ENCODE measurements at regions of chr10 and their contacts with region 1.

Region 1: GRCh38 chr10:57579926-57580325 is 687.8 kb downstream of the IPMK start:
- DNase-seq: no peak
- H3K4me3 ChIP-seq: no peak overlapping the region
- H3K27ac ChIP-seq: no peak overlapping the region
- H3K4me1 ChIP-seq: no peaks in the 10 kb centered on the region
- H3K27me3 ChIP-seq: no peaks in the 10 kb centered on the region
- CTCF ChIP-seq: peak; percentile 62

Region 2: GRCh38 chr10:58064714-58065528 is 485.0 kb after region 1 on chr10:
- CTCF ChIA-PET with region 1: no interaction called
- POLR2A ChIA-PET with region 1: no interaction called
- intact Hi-C with region 1: loop called (anchors 5 kb)
- DNase-seq: peak in 1 of 2 experiments; percentile 22
- H3K4me3 ChIP-seq: no peak overlapping the region
- H3K27ac ChIP-seq: no peak overlapping the region
- H3K4me1 ChIP-seq: no peaks in the 10 kb centered on the region
- H3K27me3 ChIP-seq: no peaks in the 10 kb centered on the region; the same call in 1 of the 2 replicates
- CTCF ChIP-seq: peak; percentile 86

Region 3: DNA sequence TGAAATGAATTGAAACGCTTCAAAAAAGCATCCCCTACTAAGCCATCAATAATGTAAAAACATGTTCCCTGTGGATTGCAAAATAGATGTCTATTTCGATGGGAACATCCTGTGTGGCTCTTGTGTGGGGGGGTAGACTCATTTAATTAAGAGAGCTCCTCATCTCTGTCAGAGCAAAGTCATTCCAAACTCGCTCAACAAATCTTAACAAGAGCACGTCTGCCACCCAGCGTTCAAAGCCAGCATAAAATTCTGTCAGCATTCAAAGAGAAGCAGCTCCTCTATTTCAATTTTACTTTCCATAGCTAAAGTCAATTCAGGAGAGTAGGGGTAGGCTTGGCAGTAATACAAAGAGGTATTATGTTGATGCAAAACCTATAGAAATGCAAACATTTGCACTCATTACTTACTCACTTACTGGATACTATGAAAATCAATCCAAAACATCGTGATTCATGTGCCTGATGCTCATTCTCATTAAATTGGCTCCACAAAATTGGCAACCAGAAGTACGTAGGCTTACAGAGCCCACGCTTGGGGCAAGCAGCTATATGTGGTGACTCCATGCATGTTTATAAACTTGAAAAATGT is 572.8 kb after region 1 on chr10:
- CTCF ChIA-PET with region 1: no interaction called
- POLR2A ChIA-PET with region 1: no interaction called
- intact Hi-C with region 1: loop called (anchors 5 kb)
- DNase-seq: peak in 1 of 2 experiments; percentile 45
- H3K4me3 ChIP-seq: no peak overlapping the region
- H3K27ac ChIP-seq: no peak overlapping the region
- H3K4me1 ChIP-seq: no peaks in the 10 kb centered on the region
- H3K27me3 ChIP-seq: no peaks in the 10 kb centered on the region
- CTCF ChIP-seq: peak; percentile 72

Measured in PC-9 (cell line).